Body of pancreas (tissue), 4 donors: ENCODE measurements at regions of chr16 and their contacts with region 1.

Region 1: GRCh38 chr16:20300312-20301097 is 26.8 kb downstream of the GP2 start:
- DNase-seq: peak; percentile 69 to 77 (median 73)
- ATAC-seq: peak; percentile 59
- H3K4me3 ChIP-seq: no peak overlapping the region
- H3K27ac ChIP-seq: peak overlapping the region in 2 of 4 donors; percentile 8 to 11
- H3K4me1 ChIP-seq: no peaks in the 10 kb centered on the region
- H3K27me3 ChIP-seq: no peaks in the 10 kb centered on the region
- CTCF ChIP-seq: peak in 5 of 7 experiments; percentile 68 to 85 (median 80)
- POLR2A ChIP-seq: no peak

Region 2: DNA sequence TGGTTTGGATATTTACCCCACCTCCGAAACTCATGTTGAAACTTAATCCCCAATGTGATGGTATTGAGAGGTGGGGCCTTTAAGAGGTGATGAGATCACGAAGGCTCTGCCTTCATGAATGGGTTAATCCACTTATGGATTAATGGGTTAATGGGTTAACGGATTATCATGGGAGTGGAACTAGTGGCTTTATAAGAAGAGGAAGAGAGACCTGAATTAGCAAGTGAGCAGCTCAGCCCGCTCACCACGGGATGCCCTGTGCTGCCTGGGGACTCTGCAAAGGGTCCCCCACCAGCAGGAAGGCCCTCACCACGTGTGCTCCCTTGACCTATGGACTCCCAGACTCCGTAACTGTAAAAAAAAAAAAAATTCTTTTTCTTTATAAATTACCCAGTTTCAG is 399.3 kb before region 1 on chr16:
- intact Hi-C with region 1: loop called (anchors 5 kb)
- DNase-seq: no peak
- ATAC-seq: no peak
- H3K4me3 ChIP-seq: no peak overlapping the region
- H3K27ac ChIP-seq: no peak overlapping the region
- H3K4me1 ChIP-seq: no peaks in the 10 kb centered on the region
- H3K27me3 ChIP-seq: no peaks in the 10 kb centered on the region
- CTCF ChIP-seq: no peak
- POLR2A ChIP-seq: no peak

Region 3: DNA sequence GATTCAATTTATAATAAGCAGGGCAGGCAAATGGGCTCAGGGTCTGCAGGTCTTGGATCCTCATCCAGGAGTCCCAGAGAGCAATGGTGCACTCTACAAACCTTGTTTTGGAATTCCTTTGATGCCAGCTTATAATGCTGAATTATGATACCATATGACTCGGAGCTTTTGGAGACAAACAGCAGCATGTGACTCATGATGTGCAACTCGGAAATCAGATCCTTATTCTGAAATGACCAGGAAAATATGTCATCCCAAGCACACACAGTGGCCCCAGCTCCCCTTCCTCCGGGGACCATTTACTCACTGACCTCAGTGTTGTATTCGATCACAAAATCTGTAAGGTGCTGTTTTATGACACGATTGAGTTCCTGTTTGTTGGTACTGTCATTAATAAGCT is 72.2 kb after region 1 on chr16:
- intact Hi-C with region 1: loop called (anchors 10 kb)
- DNase-seq: no peak
- ATAC-seq: no peak
- H3K4me3 ChIP-seq: no peak overlapping the region
- H3K27ac ChIP-seq: no peak overlapping the region
- H3K4me1 ChIP-seq: peaks cover 22% of the 10 kb centered on the region
- H3K27me3 ChIP-seq: no peaks in the 10 kb centered on the region
- CTCF ChIP-seq: no peak
- POLR2A ChIP-seq: no peak